Right ventricle myocardium inferior (tissue), 1 donor: ENCODE measurements at regions of chr14 and their contacts with region 1.

Region 1: GRCh38 chr14:94041551-94042346 is 15.6 kb downstream of the OTUB2 start:
- DNase-seq: no peak
- ATAC-seq: peak; percentile 88

Region 2: DNA sequence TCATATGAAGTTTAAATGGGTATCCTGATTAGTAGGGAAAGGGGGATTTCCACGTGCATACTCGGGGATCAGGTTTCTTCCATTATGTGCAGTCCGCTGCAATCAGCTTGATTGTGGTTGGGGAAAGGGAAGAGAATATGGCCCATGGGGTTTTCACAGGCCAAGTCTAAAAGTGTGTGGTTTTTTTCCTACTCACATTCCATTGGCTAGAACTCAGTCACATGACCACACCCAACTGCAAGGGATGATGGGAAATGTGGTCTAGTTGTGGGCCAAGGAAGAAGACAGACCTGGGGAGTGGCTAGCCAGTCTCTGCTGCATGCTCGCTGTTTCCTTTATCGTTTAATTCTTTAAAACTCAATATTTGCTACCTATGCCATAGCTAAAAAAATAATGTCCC is 358.5 kb before region 1 on chr14:
- intact Hi-C with region 1: no loop called
- DNase-seq: no peak
- ATAC-seq: no peak

Region 3: DNA sequence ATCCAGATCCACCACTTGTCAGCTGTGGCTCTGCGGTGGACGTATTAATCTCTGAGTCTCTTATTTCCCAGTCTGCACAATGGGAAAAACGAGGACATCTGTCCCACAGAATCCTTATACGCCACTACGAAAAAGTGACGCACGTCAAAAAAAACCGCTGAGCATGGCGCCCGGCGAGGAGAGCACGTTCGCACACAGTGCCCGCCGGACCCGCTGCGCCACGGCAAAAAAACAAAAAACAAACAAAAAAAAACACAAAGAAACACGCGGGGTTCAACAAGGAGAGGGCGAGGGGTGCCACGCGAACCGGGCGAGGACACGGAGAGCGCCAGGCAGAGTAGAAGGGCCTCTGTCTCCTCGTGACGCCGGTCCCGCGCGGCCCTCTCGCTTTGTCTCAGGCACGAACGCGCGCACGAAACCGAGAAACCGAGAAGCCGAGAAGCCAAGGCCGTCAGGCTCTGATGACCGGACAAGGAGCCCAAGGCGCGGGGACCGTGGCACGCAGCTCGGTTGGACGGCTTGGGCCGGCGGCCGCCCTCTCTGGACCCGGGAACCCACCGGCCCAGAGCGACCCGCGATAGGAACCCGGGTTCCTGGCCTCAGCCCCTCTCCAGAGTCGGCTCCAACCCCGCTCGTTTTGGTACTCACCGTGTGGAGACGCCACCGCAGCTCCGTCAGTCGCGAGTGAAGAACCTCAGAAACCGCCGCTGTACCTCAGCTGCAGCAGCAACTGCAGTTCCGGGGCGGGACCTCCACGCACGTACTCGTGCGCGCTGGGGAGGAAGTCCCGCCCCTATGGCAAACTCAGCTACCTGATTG is 38.9 kb after region 1 on chr14 and contains the start of gene DDX24:
- intact Hi-C with region 1: loop called (anchors 5 kb)
- DNase-seq: peak; percentile 98
- ATAC-seq: peak; percentile 99
- total RNA-seq, gene DDX24: 187 TPM

Region 4: GRCh38 chr14:94115058-94115591 is 73.4 kb after region 1 on chr14:
- intact Hi-C with region 1: no loop called
- DNase-seq: no peak
- ATAC-seq: peak; percentile 43